Activated naive CD4-positive, alpha-beta T cell treated with anti-CD3 and anti-CD28 coated beads for 36 hours (primary cell): ENCODE measurements at regions of chr12 and their contacts with region 1.

Region 1: DNA sequence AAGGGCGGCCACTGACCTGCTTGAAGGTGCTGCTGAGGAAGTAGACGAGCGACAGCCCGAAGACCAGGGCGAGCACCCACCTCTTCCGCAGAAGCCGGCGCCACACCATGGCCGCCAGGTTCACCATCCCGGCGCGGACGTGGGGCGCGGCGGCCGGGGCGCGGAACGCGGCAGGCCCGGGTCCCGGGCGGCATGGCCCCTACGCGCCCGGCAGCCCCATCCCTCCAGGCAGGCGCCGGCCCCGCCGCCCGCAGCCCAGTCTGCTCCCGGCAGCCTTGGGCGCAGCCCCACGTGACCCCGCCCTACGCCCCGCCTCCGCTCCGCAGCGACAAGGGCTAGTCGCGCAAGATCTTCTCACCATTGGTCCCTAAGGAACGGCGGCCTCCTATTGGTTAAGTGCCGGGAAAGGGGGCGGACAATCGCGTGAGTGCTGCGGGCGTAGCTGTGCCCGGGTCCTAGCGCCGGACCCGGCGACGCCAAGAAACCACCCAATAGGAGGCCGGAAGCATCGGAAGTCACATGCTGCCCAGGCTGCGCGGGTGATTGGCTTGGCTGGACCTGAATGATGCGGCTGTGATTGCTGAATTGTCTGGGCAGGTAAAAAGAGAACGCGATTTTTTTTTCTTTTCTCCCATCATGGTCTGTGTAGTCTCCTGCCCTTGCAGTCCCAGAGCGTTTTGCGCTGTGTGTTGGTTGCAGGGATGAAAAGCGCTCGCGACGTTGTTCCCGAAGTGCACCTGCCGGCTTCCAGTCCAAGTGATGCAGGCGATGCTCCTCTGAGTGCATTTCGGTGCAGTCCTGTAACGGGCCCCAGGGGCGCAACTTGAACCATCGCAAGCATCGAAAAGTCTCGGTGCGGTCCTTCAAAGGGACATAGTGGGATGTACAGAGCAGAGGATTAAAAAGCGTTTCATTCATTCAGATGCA is at the starts of genes RNFT2 and SPRING1:
- DNase-seq: peak; percentile 99
- H3K4me3 Mint-ChIP-seq: peak within 1 kb of the TSS; percentile 96
- H3K27ac Mint-ChIP-seq: peak within 1 kb of the TSS; percentile 79
- H3K4me1 Mint-ChIP-seq: peaks cover 22% of the 10 kb centered on the region
- H3K27me3 Mint-ChIP-seq: no peaks in the 10 kb centered on the region
- total RNA-seq, gene RNFT2: 13.0 to 15.8 TPM
- total RNA-seq, gene SPRING1: 14.8 to 16.9 TPM

Region 2: DNA sequence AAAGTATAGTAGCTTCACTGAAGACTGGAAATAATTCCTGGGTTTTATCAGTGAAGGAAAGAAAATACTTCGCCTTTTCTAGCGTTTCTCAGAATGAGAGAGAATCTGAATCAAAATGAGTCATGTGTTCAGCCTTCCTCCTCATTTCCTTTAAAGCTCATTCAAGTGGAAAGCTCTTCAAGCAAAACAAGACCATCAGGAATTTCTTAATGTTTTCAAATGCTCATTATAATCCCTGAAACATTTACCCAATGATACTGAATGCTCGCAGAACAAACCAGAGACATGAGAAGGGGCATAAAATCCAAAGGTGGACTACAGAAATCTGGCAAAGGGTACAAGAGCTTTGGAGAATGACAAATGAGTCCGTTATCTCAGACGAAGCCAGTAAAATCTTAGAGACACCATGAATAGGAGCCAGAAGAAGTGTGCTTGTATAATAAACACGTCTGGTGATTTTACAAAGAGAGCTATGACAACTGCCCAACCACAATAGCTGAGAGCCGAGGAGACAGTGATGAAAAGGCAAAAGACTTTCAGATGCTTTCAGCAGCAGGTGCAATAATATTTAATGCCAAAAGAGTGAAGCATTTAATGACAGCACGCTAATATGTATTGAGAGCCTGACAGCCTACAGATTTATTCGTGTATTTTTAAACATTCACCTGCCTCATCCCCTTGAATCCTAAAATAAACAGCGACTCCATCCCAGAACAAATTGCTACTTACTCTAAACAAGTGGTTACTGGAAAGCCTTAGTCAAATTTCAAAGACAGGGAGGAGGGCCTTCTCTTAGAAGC is 19.2 kb before region 1 on chr12:
- CTCF ChIA-PET with region 1: no interaction called
- intact Hi-C with region 1: no loop called
- DNase-seq: no peak
- H3K4me3 Mint-ChIP-seq: no peak overlapping the region
- H3K27ac Mint-ChIP-seq: no peak overlapping the region
- H3K4me1 Mint-ChIP-seq: peaks cover 14% of the 10 kb centered on the region
- H3K27me3 Mint-ChIP-seq: no peaks in the 10 kb centered on the region

Region 3: DNA sequence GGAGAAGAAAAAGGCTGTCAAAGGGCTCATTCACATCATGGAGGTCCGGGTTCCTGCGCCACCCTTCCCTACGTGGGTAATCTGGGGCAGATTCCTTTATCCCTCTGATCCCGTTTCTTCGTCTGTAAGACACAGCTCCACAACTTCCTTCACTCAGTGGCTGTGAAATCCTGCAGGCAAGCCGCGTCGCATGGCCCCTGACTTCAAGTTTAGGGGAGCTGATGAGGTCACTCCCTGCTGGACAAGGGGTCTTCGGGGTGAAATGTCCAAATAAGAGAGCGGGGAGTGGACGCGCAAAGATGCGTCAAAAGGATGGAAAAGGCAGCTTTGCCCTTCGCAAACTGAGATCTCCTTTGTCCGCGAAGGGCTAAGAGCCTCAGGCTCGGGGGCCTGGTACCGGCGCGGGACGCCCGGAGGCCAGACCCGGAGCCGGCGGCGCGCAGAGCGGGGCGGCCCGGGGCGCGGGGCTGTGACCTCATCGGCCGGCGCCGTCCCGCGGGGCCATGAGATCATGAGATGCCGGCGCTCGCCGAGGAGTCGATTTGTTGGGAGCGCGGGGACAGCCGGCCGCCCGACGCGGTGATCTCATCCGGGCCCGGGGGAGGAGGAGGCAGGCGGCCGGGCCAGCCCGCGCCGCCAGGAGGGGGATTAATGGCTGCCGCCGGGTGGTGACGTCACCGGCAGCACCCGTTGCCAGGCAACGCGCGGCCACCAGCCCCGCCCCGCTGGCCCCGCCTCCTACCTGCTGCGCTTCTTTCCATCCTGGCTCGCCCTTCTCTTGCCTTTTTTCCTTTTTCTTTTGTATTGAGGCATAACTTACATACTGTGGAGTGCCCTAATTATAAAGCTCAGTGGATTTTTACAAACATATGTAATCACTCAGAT is 81.2 kb after region 1 on chr12:
- CTCF ChIA-PET with region 1: no interaction called
- intact Hi-C with region 1: loop called (anchors 1 kb)
- DNase-seq: peak; percentile 87
- H3K4me3 Mint-ChIP-seq: peak overlapping the region; percentile 95
- H3K27ac Mint-ChIP-seq: peak overlapping the region; percentile 91
- H3K4me1 Mint-ChIP-seq: peaks cover 11% of the 10 kb centered on the region
- H3K27me3 Mint-ChIP-seq: no peaks in the 10 kb centered on the region

Region 4: DNA sequence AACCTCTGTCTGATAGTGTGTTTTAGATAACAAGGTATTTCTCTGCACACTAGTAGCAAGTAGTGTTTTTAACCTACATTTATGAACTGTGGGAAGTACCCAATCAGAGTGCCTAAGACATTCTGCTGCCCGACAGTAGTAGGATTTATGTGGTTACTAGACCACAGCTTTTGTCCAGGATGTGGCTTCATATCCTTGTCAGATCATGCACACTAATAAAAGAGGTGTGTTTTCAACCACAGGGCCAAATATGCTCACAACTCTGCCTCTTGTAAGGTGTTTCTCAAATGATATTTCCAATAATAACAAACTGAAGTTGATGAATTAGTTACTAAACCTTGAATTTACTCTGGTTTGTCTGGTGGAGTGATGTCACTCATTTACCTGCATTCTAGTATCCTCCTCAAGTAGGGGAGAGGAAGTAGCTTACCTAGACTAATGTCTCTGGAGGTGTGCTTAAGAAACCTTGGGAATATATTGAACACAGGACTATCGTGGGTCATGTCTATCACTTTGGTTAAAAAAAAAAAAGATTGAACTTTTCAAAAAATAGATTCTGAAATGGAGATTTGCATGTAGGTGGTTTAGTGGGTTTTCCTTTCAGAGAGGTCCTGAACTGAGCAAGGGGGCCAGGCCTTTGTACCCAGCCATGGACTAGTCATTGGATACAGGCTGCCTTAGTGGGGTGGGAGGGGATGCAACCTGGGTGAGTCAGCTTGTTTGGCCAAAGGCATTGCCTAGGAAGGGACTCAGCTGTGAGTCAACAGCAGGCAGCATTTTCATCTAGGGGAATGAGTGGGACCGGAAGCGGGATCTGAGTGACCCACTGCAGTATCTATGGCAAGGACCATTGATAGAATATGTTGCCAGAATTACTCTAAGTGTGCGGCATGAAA is 186.8 kb after region 1 on chr12:
- CTCF ChIA-PET with region 1: no interaction called
- intact Hi-C with region 1: loop called (anchors 1 kb)
- DNase-seq: peak; percentile 70
- H3K4me3 Mint-ChIP-seq: no peak overlapping the region
- H3K27ac Mint-ChIP-seq: no peak overlapping the region
- H3K4me1 Mint-ChIP-seq: peaks cover 66% of the 10 kb centered on the region
- H3K27me3 Mint-ChIP-seq: peaks cover 3% of the 10 kb centered on the region

Region 5: GRCh38 chr12:117098361-117099217 is 360.6 kb after region 1 on chr12:
- CTCF ChIA-PET with region 1: no interaction called
- intact Hi-C with region 1: loop called (anchors 1 kb)
- DNase-seq: peak; percentile 53
- H3K4me3 Mint-ChIP-seq: peak overlapping the region; percentile 67
- H3K27ac Mint-ChIP-seq: no peak overlapping the region
- H3K4me1 Mint-ChIP-seq: peaks cover 10% of the 10 kb centered on the region
- H3K27me3 Mint-ChIP-seq: peaks cover 31% of the 10 kb centered on the region

Region 6: GRCh38 chr12:118016424-118017264 is 1278.6 kb after region 1 on chr12 and contains the start of gene RFC5:
- CTCF ChIA-PET with region 1: no interaction called
- intact Hi-C with region 1: loop called (anchors 1 kb)
- DNase-seq: peak; percentile 98
- H3K4me3 Mint-ChIP-seq: peak within 1 kb of the TSS; percentile 96
- H3K27ac Mint-ChIP-seq: peak within 1 kb of the TSS; percentile 88
- H3K4me1 Mint-ChIP-seq: peaks cover 19% of the 10 kb centered on the region
- H3K27me3 Mint-ChIP-seq: no peaks in the 10 kb centered on the region
- total RNA-seq, gene RFC5: 62.0 to 62.5 TPM